PC-9 (cell line): ENCODE measurements at regions of chr10 and their contacts with region 1.

Region 1: DNA sequence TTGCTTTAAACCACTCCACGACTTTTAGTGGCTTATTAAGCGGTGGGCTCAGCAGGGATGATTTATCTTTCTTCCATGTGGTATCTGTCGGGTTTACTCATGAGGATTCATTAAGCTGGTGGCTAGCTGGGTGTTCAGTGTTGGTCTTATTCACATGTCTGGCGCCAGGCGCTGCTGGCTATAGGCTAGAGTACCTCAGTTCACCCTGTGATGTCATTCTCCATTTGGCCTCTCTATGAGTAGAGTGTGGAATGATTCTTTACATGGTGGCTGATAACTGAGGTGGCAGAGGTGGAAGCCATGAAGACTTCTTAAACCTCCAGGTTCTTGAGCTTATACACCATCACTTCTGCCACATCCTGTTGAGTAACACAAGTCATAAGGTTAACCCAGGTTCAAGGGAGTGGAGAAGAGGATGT is 115.4 kb downstream of the MLLT10 start:
- DNase-seq: no peak
- H3K4me3 ChIP-seq: no peak overlapping the region
- H3K27ac ChIP-seq: no peak overlapping the region
- H3K4me1 ChIP-seq: no peaks in the 10 kb centered on the region
- H3K27me3 ChIP-seq: no peaks in the 10 kb centered on the region
- CTCF ChIP-seq: no peak

Region 2: GRCh38 chr10:21393931-21394330 is 255.5 kb before region 1 on chr10:
- CTCF ChIA-PET with region 1: no interaction called
- POLR2A ChIA-PET with region 1: interaction called, 14 read pairs
- intact Hi-C with region 1: no loop called
- DNase-seq: no peak
- H3K4me3 ChIP-seq: no peak overlapping the region
- H3K27ac ChIP-seq: no peak overlapping the region
- H3K4me1 ChIP-seq: peaks cover 15% of the 10 kb centered on the region
- H3K27me3 ChIP-seq: no peaks in the 10 kb centered on the region
- CTCF ChIP-seq: no peak

Region 3: GRCh38 chr10:21661935-21662334 is 12.5 kb after region 1 on chr10:
- CTCF ChIA-PET with region 1: no interaction called
- POLR2A ChIA-PET with region 1: no interaction called
- intact Hi-C with region 1: no loop called
- DNase-seq: no peak
- H3K4me3 ChIP-seq: no peak overlapping the region
- H3K27ac ChIP-seq: no peak overlapping the region
- H3K4me1 ChIP-seq: no peaks in the 10 kb centered on the region
- H3K27me3 ChIP-seq: no peaks in the 10 kb centered on the region
- CTCF ChIP-seq: no peak